ENCODE measurements at regions of chr10 and their contacts with region 1.

Region 1: GRCh38 chr10:94279835-94280709 is 82.7 kb downstream of the NOC3L start:
- DNase-seq: peak; percentile 6 to 34 (median 31)
- H3K4me3 ChIP-seq: no peak overlapping the region
- H3K4me3 Mint-ChIP-seq: peak overlapping the region in 1 of 2 donors; percentile 61
- H3K27ac ChIP-seq: no peak overlapping the region
- H3K27ac Mint-ChIP-seq: no peak overlapping the region
- H3K4me1 ChIP-seq: no peaks in the 10 kb centered on the region
- H3K4me1 Mint-ChIP-seq: peaks cover 3% of the 10 kb centered on the region
- H3K27me3 ChIP-seq: peaks cover 4 to 12% of the 10 kb centered on the region in 2 donors
- H3K27me3 Mint-ChIP-seq: peaks cover 2 to 11% (median 5%) of the 10 kb centered on the region in 3 donors
- CTCF ChIP-seq: peak; percentile 94

Region 2: GRCh38 chr10:94443047-94443446 is 163.0 kb after region 1 on chr10:
- intact Hi-C with region 1: loop called (anchors 2 to 5 kb)
- DNase-seq: no peak
- H3K4me3 ChIP-seq: no peak overlapping the region
- H3K4me3 Mint-ChIP-seq: no peak overlapping the region
- H3K27ac ChIP-seq: no peak overlapping the region
- H3K27ac Mint-ChIP-seq: no peak overlapping the region
- H3K4me1 ChIP-seq: no peaks in the 10 kb centered on the region
- H3K4me1 Mint-ChIP-seq: peaks cover 5% of the 10 kb centered on the region
- H3K27me3 ChIP-seq: no peaks in the 10 kb centered on the region
- H3K27me3 Mint-ChIP-seq: peaks cover 0 to 2% (median 1%) of the 10 kb centered on the region in 3 donors
- CTCF ChIP-seq: no peak